ENCODE measurements at regions of chr10 and their contacts with region 1.

Region 1: DNA sequence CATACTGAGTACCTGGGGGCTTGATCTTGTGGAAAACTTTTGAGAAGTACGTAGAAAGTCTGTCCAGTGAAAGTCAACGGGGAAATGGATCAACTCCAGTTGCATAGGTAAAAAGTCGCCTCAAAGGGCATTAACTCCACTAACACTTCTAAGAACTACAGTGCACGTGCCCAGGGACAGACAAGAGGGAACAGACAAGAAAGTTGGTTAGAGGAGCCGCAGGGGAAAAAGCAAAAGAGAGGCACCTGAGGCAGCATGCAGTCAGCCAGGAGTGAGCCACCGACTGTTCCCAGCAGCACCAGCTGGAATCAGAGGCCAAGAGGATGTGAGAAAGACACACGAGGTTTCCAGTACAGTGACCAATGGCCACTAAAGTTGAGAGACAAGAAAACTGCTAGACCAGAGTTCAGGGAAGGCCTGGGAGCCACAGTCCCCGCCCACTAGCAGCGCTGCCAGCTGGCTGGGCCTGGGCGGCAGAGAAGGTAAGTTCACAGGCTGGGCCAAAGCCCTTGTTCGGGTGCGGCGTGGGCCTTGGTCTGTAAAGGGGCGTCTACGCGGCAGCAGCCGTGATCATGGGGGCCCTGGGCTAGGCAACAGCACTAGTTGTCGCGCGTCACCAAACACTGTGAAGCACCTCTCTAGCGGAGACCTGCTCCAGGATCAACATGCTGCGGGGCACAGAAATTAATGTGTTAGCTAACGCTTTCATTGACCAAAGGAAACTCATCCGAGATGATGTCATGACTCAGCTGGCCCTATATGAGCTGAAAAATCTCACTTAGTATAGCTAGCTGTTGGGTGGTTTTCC is 14.0 kb downstream of the ITGB1 start:
- DNase-seq: peak; percentile 81
- H3K4me3 Mint-ChIP-seq: peak overlapping the region; percentile 71
- H3K27ac Mint-ChIP-seq: peak overlapping the region; percentile 91
- H3K4me1 Mint-ChIP-seq: peaks cover 65% of the 10 kb centered on the region
- H3K27me3 Mint-ChIP-seq: no peaks in the 10 kb centered on the region
- CTCF ChIP-seq: no peak

Region 2: DNA sequence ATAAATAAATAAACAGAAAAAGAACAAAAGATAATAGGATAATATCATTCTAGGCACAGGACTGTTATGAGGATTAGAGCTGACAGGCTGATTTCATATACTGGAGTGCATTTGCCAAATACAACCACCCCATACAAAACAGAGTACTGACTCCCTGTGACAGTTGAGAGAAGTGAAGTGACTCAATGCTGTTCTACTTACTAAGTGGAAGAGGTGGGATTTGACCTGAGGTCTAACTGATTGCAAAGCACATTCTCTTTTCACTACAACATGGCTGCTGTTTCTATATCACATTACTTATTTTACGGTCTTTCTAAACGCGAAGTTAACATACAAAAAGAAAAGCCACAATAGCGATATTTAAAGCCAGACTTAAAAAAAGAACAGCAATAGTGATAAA is 37.5 kb before region 1 on chr10:
- CTCF ChIA-PET with region 1: no interaction called
- intact Hi-C with region 1: loop called (anchors 5 kb)
- DNase-seq: no peak
- H3K4me3 Mint-ChIP-seq: no peak overlapping the region
- H3K27ac Mint-ChIP-seq: no peak overlapping the region
- H3K4me1 Mint-ChIP-seq: peaks cover 11% of the 10 kb centered on the region
- H3K27me3 Mint-ChIP-seq: no peaks in the 10 kb centered on the region
- CTCF ChIP-seq: no peak